Naive thymus-derived CD4-positive, alpha-beta T cell (primary cell): ENCODE measurements at regions of chr17 and their contacts with region 1.

Region 1: GRCh38 chr17:14300575-14301278 is at the start of gene HS3ST3B1:
- DNase-seq: peak; percentile 93 to 100 (median 99)
- ATAC-seq: peak; percentile 90
- H3K4me3 ChIP-seq: peak within 1 kb of the TSS; percentile 99
- H3K4me3 Mint-ChIP-seq: peak within 1 kb of the TSS; percentile 85 to 100 (median 96)
- H3K27ac ChIP-seq: peak within 1 kb of the TSS; percentile 63
- H3K27ac Mint-ChIP-seq: peak within 1 kb of the TSS; percentile 86 to 94 (median 90)
- H3K4me1 ChIP-seq: peaks cover 39 to 44% of the 10 kb centered on the region in 2 donors
- H3K4me1 Mint-ChIP-seq: peaks cover 49 to 69% (median 62%) of the 10 kb centered on the region in 7 donors
- H3K27me3 ChIP-seq: peaks cover 10 to 22% of the 10 kb centered on the region in 2 donors
- H3K27me3 Mint-ChIP-seq: peaks cover 29 to 39% (median 37%) of the 10 kb centered on the region in 5 donors
- total RNA-seq, gene HS3ST3B1: 11.7 to 40.7 (median 30.8) TPM

Region 2: GRCh38 chr17:13337864-13338371 is 962.8 kb before region 1 on chr17:
- CTCF ChIA-PET with region 1: no interaction called
- POLR2A ChIA-PET with region 1: no interaction called
- intact Hi-C with region 1: loop called (anchors 5 to 10 kb)
- DNase-seq: peak in 5 of 9 donors; percentile 4 to 22 (median 16)
- ATAC-seq: no peak
- H3K4me3 ChIP-seq: no peak overlapping the region
- H3K4me3 Mint-ChIP-seq: peak overlapping the region in 7 of 10 donors; percentile 28 to 63 (median 51)
- H3K27ac ChIP-seq: no peak overlapping the region
- H3K27ac Mint-ChIP-seq: no peak overlapping the region
- H3K4me1 ChIP-seq: no peaks in the 10 kb centered on the region
- H3K4me1 Mint-ChIP-seq: peaks cover 0 to 7% (median 3%) of the 10 kb centered on the region in 7 donors
- H3K27me3 ChIP-seq: peaks cover 0 to 5% of the 10 kb centered on the region in 2 donors
- H3K27me3 Mint-ChIP-seq: peaks cover 9 to 54% (median 30%) of the 10 kb centered on the region in 5 donors

Region 3: GRCh38 chr17:13962723-13963240 is 337.9 kb before region 1 on chr17:
- CTCF ChIA-PET with region 1: no interaction called
- POLR2A ChIA-PET with region 1: no interaction called
- intact Hi-C with region 1: loop called in 1 of 2 experiments (anchors 5 kb)
- DNase-seq: no peak
- ATAC-seq: no peak
- H3K4me3 ChIP-seq: no peak overlapping the region
- H3K4me3 Mint-ChIP-seq: peak overlapping the region in 1 of 10 donors; percentile 17
- H3K27ac ChIP-seq: no peak overlapping the region
- H3K27ac Mint-ChIP-seq: peak overlapping the region in 1 of 9 donors; percentile 44
- H3K4me1 ChIP-seq: no peaks in the 10 kb centered on the region
- H3K4me1 Mint-ChIP-seq: peaks cover 0 to 17% (median 3%) of the 10 kb centered on the region in 7 donors
- H3K27me3 ChIP-seq: no peaks in the 10 kb centered on the region
- H3K27me3 Mint-ChIP-seq: no peaks in the 10 kb centered on the region

Region 4: GRCh38 chr17:14196377-14196997 is 104.2 kb before region 1 on chr17:
- CTCF ChIA-PET with region 1: interaction called, 5 read pairs
- POLR2A ChIA-PET with region 1: interaction called, 69 read pairs
- intact Hi-C with region 1: loop called (anchors 1 kb)
- DNase-seq: peak in 2 of 9 donors; percentile 25 to 39
- ATAC-seq: no peak
- H3K4me3 ChIP-seq: peak overlapping the region; percentile 28
- H3K4me3 Mint-ChIP-seq: peak overlapping the region; percentile 54 to 82 (median 74)
- H3K27ac ChIP-seq: peak overlapping the region; percentile 63
- H3K27ac Mint-ChIP-seq: peak overlapping the region; percentile 86 to 99 (median 96)
- H3K4me1 ChIP-seq: peaks cover 77 to 78% of the 10 kb centered on the region in 2 donors
- H3K4me1 Mint-ChIP-seq: peaks cover 66 to 95% (median 85%) of the 10 kb centered on the region in 7 donors
- H3K27me3 ChIP-seq: no peaks in the 10 kb centered on the region
- H3K27me3 Mint-ChIP-seq: no peaks in the 10 kb centered on the region

Region 5: DNA sequence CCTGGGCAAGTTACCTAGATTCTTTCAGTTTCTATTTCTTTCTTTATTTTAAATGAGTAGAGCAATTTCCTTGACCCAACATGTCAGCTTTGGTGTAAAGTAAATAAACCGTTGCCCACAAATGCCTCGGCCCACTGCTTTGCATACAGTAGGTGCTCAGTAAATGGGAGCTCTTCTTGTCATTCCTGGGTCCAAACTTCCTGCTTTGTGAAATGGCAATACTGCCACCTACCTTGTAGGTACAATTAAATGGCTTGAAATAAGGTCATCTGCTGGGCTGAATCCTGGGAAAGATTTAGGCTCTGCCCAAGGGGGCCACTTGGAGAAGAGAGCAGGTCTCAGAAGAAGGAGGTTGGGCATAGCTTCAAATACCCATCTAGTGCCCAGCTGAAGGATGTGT is 253.1 kb after region 1 on chr17:
- CTCF ChIA-PET with region 1: interaction called, 9 read pairs
- POLR2A ChIA-PET with region 1: interaction called, 6 read pairs
- intact Hi-C with region 1: loop called in 1 of 2 experiments (anchors 1 kb)
- DNase-seq: no peak
- ATAC-seq: no peak
- H3K4me3 ChIP-seq: no peak overlapping the region
- H3K4me3 Mint-ChIP-seq: no peak overlapping the region
- H3K27ac ChIP-seq: no peak overlapping the region
- H3K27ac Mint-ChIP-seq: peak overlapping the region in 1 of 9 donors; percentile 14
- H3K4me1 ChIP-seq: no peaks in the 10 kb centered on the region
- H3K4me1 Mint-ChIP-seq: peaks cover 0 to 13% (median 6%) of the 10 kb centered on the region in 7 donors
- H3K27me3 ChIP-seq: no peaks in the 10 kb centered on the region
- H3K27me3 Mint-ChIP-seq: peaks cover 0 to 1% (median 0%) of the 10 kb centered on the region in 5 donors

Region 6: DNA sequence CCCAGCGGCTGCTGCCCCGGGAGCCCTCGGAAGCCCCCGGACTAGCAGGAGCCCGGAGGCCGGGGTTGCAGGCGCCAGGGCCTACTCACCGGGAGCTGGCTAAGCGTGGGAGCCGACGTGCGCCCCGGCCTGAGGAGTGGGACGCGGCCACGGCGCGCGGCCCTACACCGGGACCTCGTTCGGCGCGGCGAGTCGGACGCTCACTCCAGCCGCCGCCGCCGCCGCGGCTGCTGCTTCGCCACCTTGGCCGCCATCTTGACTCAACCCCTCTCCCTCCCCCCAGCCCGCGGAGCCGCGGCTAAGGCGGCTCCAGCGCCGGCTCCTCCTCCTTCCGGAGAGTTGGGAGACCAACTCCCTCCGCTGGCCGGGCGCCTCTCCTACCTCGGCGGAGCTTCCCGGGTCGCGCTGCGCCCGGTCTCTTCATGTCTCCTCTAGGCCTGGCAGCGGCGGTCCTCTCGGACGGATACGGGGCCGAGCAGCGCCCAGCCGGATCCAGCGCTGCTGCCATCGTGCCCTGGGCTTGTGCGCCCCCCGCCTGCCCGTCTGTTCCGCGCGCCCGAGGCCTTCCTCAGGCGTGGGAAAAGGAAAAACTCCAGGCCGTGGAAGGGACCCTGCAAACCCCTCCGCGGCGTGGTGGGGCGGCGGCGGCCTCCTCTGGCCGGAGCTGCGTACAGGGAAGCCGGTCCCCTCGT is 1914.7 kb after region 1 on chr17 and contains the start of gene NCOR1:
- CTCF ChIA-PET with region 1: no interaction called
- POLR2A ChIA-PET with region 1: no interaction called
- intact Hi-C with region 1: loop called in 1 of 2 experiments (anchors 10 kb)
- DNase-seq: peak; percentile 76 to 89 (median 82)
- ATAC-seq: peak; percentile 93
- H3K4me3 ChIP-seq: peak within 1 kb of the TSS; percentile 76
- H3K4me3 Mint-ChIP-seq: peak within 1 kb of the TSS; percentile 89 to 99 (median 96)
- H3K27ac ChIP-seq: peak within 1 kb of the TSS; percentile 91
- H3K27ac Mint-ChIP-seq: peak within 1 kb of the TSS; percentile 58 to 98 (median 93)
- H3K4me1 ChIP-seq: peaks cover 22 to 29% of the 10 kb centered on the region in 2 donors
- H3K4me1 Mint-ChIP-seq: peaks cover 25 to 69% (median 50%) of the 10 kb centered on the region in 7 donors
- H3K27me3 ChIP-seq: no peaks in the 10 kb centered on the region
- H3K27me3 Mint-ChIP-seq: no peaks in the 10 kb centered on the region
- total RNA-seq, gene NCOR1: 131 to 169 (median 149) TPM